GM18951 (cell line): ENCODE measurements at regions of chr3 and their contacts with region 1.

Region 1: GRCh38 chr3:38460377-38461270 is 6.9 kb downstream of the ACVR2B start:
- POLR2A ChIP-seq: no peak

Region 2: DNA sequence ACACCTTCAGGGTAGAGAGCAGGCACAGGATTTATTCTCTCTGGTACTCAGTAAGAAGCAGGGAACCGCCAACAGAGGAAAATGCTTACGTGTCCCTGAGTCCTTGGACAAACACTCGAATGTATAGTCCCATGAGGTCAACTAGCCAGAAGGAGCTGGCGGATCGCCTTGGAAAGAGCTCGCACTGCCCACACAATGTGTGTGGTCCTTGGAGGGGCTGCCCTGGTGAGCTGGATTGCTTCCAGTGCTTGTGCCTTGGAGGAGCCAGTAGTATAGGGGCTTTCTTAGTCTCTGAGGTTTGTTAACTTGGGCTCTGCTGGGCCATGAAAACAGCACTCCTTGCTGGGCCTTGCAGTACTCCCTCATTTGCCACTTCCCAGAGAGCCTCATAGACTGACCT is 510.8 kb before region 1 on chr3:
- in situ Hi-C with region 1: no loop called
- POLR2A ChIP-seq: no peak

Region 3: DNA sequence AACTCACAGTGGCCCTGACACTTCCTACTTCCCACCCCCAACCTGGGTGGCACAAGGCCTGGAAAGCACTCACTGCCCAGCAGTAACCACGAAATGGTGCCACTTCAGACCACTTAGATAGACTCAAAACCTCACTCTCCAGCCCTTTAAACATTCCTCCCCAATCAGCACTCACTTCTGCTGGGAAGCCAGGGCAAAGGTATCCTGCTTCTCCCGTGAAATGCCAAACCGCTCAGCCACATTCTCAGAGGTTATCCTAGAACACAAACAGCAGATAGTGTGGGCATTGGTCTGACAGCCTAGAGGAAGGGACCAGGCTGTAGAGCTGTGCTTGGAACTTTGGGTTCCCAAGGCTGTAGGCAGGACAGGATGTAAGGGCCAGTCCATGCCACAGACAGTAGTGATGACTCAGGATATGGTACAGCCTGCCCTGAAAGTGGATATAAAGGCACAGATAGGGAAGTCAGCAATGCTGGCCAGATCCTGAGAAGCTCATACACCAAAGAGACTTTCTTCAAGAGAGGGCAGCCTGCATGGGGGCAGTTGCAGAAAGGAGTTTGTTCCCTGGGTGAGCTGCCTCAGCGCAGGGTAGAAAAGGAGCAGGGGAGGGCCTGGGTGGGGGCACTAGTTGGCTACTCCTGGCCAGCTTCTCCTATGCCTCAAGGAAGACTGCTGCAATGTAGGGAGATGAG is 332.9 kb before region 1 on chr3:
- in situ Hi-C with region 1: loop called (anchors 10 kb)
- POLR2A ChIP-seq: no peak

Region 4: GRCh38 chr3:38582941-38583645 is 122.5 kb after region 1 on chr3:
- in situ Hi-C with region 1: no loop called
- POLR2A ChIP-seq: no peak